Heart left ventricle (tissue), 16 donors: ENCODE measurements at regions of chrX and their contacts with region 1.

Region 1: GRCh38 chrX:37745354-37745753 is 34.5 kb upstream of the CYBB start:
- DNase-seq: peak; percentile 45 to 79 (median 65)
- ATAC-seq: peak; percentile 55 to 72 (median 70)
- H3K4me3 ChIP-seq: no peak overlapping the region
- H3K27ac ChIP-seq: peak overlapping the region in 1 of 12 donors; percentile 71
- H3K4me1 ChIP-seq: peaks cover 0 to 10% (median 0%) of the 10 kb centered on the region in 12 donors
- H3K27me3 ChIP-seq: peaks cover 0 to 10% (median 0%) of the 10 kb centered on the region in 9 donors
- CTCF ChIP-seq: peak; percentile 57 to 86 (median 66)
- POLR2A ChIP-seq: no peak

Region 2: GRCh38 chrX:37825209-37825842 is 80.0 kb after region 1 on chrX:
- intact Hi-C with region 1: loop called (anchors 1 to 5 kb)
- DNase-seq: peak in 1 of 5 donors; percentile 26
- ATAC-seq: no peak
- H3K4me3 ChIP-seq: no peak overlapping the region
- H3K27ac ChIP-seq: no peak overlapping the region
- H3K4me1 ChIP-seq: peaks cover 0 to 7% (median 0%) of the 10 kb centered on the region in 12 donors
- H3K27me3 ChIP-seq: peaks cover 0 to 4% (median 0%) of the 10 kb centered on the region in 9 donors
- CTCF ChIP-seq: peak; percentile 68 to 88 (median 74)
- POLR2A ChIP-seq: no peak

Region 3: DNA sequence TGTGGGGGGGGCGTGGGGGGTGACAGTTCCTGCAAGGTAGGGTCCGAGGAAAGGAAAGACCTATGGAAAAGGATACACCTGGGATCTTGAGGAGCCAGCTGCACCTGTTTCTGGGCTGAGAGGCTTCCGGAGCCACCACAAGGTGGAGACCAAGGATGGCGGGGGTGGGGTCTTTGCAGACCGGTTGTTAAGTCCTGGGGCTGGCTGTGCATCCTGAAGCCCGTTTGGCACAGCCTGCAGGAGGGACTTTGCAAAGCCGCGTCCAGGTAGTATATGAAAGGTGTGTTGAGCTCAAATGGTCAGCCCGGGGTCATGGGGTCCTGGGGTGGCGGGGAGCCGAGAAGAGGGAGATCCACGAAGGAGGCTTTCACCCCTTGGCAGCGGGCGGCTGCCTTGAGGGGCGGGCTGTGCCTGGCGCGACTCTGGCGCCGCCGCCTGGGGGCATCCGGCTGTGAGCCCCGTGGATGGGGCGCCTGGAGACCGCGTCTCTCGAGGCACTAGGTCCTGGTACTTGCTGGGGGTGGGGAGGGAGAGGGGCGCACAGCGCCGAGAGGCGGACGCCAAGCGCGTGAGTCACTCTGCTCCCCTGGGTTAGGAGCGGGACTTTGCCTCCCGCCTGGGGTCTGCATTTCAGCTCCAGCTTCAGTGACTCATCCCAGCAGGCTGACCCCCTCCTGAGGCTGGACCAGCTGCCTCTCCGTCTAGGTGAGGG is 160.2 kb after region 1 on chrX:
- intact Hi-C with region 1: loop called in 1 of 10 experiments (anchors 10 kb)
- DNase-seq: peak in 4 of 5 donors; percentile 8 to 31 (median 18)
- ATAC-seq: peak in 3 of 4 donors; percentile 66 to 87 (median 78)
- H3K4me3 ChIP-seq: peak overlapping the region in 10 of 12 donors; percentile 4 to 54 (median 35)
- H3K27ac ChIP-seq: no peak overlapping the region
- H3K4me1 ChIP-seq: peaks cover 0 to 8% (median 0%) of the 10 kb centered on the region in 12 donors
- H3K27me3 ChIP-seq: peaks cover 0 to 29% (median 0%) of the 10 kb centered on the region in 9 donors
- CTCF ChIP-seq: peak in 5 of 12 donors; percentile 9 to 35 (median 29)
- POLR2A ChIP-seq: no peak

Region 4: GRCh38 chrX:38166478-38167083 is 421.2 kb after region 1 on chrX:
- intact Hi-C with region 1: loop called in 5 of 10 experiments (anchors 2 to 10 kb)
- DNase-seq: no peak
- ATAC-seq: no peak
- H3K4me3 ChIP-seq: no peak overlapping the region
- H3K27ac ChIP-seq: no peak overlapping the region
- H3K4me1 ChIP-seq: no peaks in the 10 kb centered on the region
- H3K27me3 ChIP-seq: peaks cover 0 to 23% (median 0%) of the 10 kb centered on the region in 9 donors
- CTCF ChIP-seq: peak; percentile 35 to 72 (median 48)
- POLR2A ChIP-seq: no peak

Region 5: GRCh38 chrX:38175140-38175539 is 429.8 kb after region 1 on chrX:
- intact Hi-C with region 1: loop called in 3 of 10 experiments (anchors 2 to 10 kb)
- DNase-seq: peak in 1 of 5 donors; percentile 15
- ATAC-seq: peak in 1 of 4 donors; percentile 54
- H3K4me3 ChIP-seq: no peak overlapping the region
- H3K27ac ChIP-seq: no peak overlapping the region
- H3K4me1 ChIP-seq: no peaks in the 10 kb centered on the region
- H3K27me3 ChIP-seq: peaks cover 0 to 13% (median 0%) of the 10 kb centered on the region in 9 donors
- CTCF ChIP-seq: peak in 7 of 12 donors; percentile 12 to 46 (median 25)
- POLR2A ChIP-seq: no peak